ENCODE measurements at regions of chr1 and their contacts with region 1.

Region 1: GRCh38 chr1:68633141-68633919 is 136.4 kb upstream of the DEPDC1 start:
- DNase-seq: no peak
- ATAC-seq: no peak

Region 2: GRCh38 chr1:68565923-68566322 is 67.4 kb before region 1 on chr1:
- intact Hi-C with region 1: no loop called
- DNase-seq: no peak
- ATAC-seq: no peak

Region 3: DNA sequence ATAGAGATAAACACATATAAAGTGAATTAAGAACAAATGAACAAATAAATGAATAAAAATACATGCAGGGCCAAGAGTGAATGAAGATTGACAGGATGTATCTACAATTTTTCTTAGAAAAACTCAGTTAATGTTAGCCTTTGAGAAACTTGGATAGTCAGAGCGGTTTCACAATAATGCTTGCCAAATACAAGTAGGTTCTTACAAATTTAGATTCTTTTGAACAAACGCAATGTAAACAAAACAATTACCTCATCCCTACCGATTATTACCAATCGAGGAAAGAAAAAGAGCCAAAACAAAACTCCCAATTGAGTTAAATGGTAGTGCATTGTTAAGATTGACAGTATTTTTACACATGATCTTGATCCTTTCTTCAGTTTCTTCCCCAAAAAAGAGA is 40.4 kb after region 1 on chr1:
- intact Hi-C with region 1: loop called (anchors 1 kb)
- DNase-seq: no peak
- ATAC-seq: no peak